CD4-positive, alpha-beta T cell (primary cell): ENCODE measurements at regions of chr12 and their contacts with region 1.

Region 1: GRCh38 chr12:66409195-66409871 is 107.0 kb downstream of the HELB start:
- DNase-seq: peak in 12 of 14 experiments; percentile 4 to 73 (median 26)
- ATAC-seq: no peak
- H3K4me3 ChIP-seq: no peak overlapping the region
- H3K4me3 Mint-ChIP-seq: no peak overlapping the region
- H3K27ac ChIP-seq: no peak overlapping the region
- H3K27ac Mint-ChIP-seq: no peak overlapping the region
- H3K4me1 ChIP-seq: no peaks in the 10 kb centered on the region
- H3K4me1 Mint-ChIP-seq: no peaks in the 10 kb centered on the region
- H3K27me3 ChIP-seq: no peaks in the 10 kb centered on the region
- H3K27me3 Mint-ChIP-seq: peaks cover 19% of the 10 kb centered on the region
- CTCF ChIP-seq: peak; percentile 93

Region 2: DNA sequence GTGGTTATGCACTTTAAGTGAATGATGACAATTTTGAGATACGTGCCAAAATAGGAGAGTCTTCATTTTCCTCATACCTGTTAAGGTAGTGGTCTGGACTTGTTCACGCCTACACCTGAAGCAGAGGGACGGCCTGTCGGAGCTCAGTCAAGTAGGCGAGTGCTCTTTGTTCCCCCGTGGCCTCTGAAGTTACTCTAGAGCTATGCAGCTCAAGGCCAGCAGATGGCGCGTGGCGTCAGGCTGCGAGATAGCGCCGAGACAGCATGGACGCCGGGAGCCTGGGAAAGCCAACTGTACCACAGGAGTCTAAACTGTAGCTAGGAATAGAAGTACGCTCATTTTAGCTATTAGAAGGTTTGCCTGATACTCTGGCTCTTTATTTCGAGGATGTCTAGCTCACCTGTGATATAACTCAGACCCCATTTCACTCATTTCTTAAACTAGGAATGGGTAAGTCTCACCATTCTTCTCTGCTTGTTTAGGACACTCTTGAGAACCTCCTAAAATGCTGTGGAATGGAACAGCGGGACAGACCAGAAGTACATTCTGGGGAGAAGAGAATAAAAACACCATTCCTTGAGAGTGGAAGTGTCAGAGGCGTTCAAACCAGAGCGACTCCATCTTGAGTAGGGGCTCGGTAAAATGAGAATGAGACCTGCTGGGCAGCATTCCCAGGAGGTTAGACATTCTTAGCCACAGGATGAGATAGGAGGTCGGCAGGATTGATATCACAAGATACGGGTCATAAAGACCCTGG is 852.5 kb before region 1 on chr12:
- CTCF ChIA-PET with region 1: no interaction called
- POLR2A ChIA-PET with region 1: no interaction called
- intact Hi-C with region 1: loop called in 1 of 2 experiments (anchors 2 kb)
- DNase-seq: peak; percentile 22 to 69 (median 40)
- ATAC-seq: peak; percentile 82
- H3K4me3 ChIP-seq: no peak overlapping the region
- H3K4me3 Mint-ChIP-seq: no peak overlapping the region
- H3K27ac ChIP-seq: no peak overlapping the region
- H3K27ac Mint-ChIP-seq: no peak overlapping the region
- H3K4me1 ChIP-seq: peaks cover 5% of the 10 kb centered on the region
- H3K4me1 Mint-ChIP-seq: no peaks in the 10 kb centered on the region
- H3K27me3 ChIP-seq: peaks cover 0 to 4% of the 10 kb centered on the region in 2 experiments
- H3K27me3 Mint-ChIP-seq: peaks cover 19% of the 10 kb centered on the region
- CTCF ChIP-seq: peak; percentile 70

Region 3: DNA sequence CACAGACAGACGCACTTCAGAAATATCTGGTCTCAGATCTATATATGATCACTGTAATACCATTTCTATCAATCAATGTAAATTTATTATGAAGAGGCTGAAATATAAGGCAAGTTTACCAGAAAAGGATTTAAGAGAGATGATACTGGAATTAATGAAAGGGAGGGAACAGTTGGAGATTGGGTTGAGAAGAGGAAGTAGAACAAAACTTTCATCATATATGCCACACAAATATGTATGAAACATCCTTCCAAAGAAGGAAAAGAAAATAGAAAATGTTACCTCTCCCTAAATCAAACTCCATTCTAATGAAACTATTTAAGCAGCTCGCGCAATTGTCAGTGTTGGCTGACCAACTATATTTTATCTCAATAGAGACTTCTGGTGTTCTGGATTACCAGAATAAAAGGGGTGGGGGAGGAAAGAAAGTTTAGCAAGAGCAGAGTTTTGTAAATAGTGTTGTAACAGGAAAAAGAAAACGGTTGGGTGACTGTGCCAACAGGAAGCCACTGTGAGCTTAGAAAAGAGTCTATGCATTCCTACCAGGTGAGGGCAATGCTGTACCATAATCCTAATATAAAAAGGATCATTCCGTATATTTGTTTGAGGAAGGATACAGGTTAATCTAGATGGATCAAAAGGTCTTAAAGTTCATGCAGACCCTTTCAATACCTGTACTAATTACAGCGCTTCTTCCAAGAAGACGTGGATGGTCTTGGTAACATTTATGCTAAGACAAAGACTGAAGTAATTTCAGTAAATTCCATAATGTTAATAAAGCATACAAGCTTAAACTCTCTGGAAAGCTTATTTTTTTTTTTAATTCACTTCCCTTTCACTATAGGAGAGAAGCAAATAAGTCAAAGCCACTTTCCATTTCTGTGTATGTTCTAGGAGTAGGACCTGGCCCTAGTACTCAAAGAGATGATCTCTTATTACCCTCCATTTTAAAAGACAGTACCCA is 264.3 kb before region 1 on chr12:
- CTCF ChIA-PET with region 1: no interaction called
- POLR2A ChIA-PET with region 1: no interaction called
- intact Hi-C with region 1: loop called (anchors 1 kb)
- DNase-seq: peak in 3 of 14 experiments; percentile 11 to 52 (median 52)
- ATAC-seq: peak; percentile 73
- H3K4me3 ChIP-seq: no peak overlapping the region
- H3K4me3 Mint-ChIP-seq: no peak overlapping the region
- H3K27ac ChIP-seq: no peak overlapping the region
- H3K27ac Mint-ChIP-seq: peak overlapping the region; percentile 50
- H3K4me1 ChIP-seq: no peaks in the 10 kb centered on the region
- H3K4me1 Mint-ChIP-seq: peaks cover 34% of the 10 kb centered on the region
- H3K27me3 ChIP-seq: no peaks in the 10 kb centered on the region
- H3K27me3 Mint-ChIP-seq: no peaks in the 10 kb centered on the region
- CTCF ChIP-seq: peak; percentile 36

Region 4: DNA sequence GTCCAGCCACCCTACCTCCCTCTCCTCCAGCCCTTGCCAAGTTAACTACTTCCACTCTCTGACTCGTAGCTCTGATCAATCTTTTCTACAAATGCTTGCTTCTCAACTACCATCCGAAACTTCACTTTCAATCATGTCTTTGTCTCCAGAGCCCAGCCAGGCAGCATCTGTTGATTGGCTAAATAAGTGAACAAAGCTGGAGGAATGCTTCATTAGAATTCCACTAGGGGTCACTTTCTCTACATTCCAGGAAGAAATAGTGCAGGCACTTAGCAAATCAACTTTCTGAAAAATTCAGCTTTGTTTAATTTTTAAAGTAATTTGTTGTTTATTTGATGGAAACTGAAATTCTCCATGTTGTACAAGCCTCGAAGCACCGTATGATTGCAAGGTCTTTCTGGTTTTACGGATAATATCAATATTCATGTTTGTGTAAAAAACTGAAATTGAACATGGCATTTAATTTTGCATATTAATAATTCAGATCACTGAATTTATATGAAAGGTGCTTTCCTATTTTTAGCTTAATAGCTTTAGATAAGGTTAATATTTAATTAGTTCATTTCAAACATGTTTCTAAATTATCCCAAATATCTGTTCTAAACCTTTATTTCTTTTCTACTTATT is 139.5 kb before region 1 on chr12:
- CTCF ChIA-PET with region 1: interaction called, 13 read pairs
- POLR2A ChIA-PET with region 1: no interaction called
- intact Hi-C with region 1: loop called (anchors 1 kb)
- DNase-seq: peak in 5 of 14 experiments; percentile 7 to 72 (median 67)
- ATAC-seq: peak; percentile 73
- H3K4me3 ChIP-seq: no peak overlapping the region
- H3K4me3 Mint-ChIP-seq: no peak overlapping the region
- H3K27ac ChIP-seq: no peak overlapping the region
- H3K27ac Mint-ChIP-seq: no peak overlapping the region
- H3K4me1 ChIP-seq: peaks cover 20% of the 10 kb centered on the region
- H3K4me1 Mint-ChIP-seq: peaks cover 6% of the 10 kb centered on the region
- H3K27me3 ChIP-seq: no peaks in the 10 kb centered on the region
- H3K27me3 Mint-ChIP-seq: no peaks in the 10 kb centered on the region
- CTCF ChIP-seq: peak; percentile 83

Region 5: GRCh38 chr12:66279123-66279712 is 130.1 kb before region 1 on chr12:
- CTCF ChIA-PET with region 1: interaction called, 3 read pairs
- POLR2A ChIA-PET with region 1: no interaction called
- intact Hi-C with region 1: loop called (anchors 1 to 2 kb)
- DNase-seq: peak; percentile 29 to 74 (median 42)
- ATAC-seq: peak; percentile 76
- H3K4me3 ChIP-seq: no peak overlapping the region
- H3K4me3 Mint-ChIP-seq: peak overlapping the region; percentile 2
- H3K27ac ChIP-seq: no peak overlapping the region
- H3K27ac Mint-ChIP-seq: no peak overlapping the region
- H3K4me1 ChIP-seq: peaks cover 27% of the 10 kb centered on the region
- H3K4me1 Mint-ChIP-seq: peaks cover 66% of the 10 kb centered on the region
- H3K27me3 ChIP-seq: no peaks in the 10 kb centered on the region
- H3K27me3 Mint-ChIP-seq: no peaks in the 10 kb centered on the region
- CTCF ChIP-seq: peak; percentile 83

Region 6: DNA sequence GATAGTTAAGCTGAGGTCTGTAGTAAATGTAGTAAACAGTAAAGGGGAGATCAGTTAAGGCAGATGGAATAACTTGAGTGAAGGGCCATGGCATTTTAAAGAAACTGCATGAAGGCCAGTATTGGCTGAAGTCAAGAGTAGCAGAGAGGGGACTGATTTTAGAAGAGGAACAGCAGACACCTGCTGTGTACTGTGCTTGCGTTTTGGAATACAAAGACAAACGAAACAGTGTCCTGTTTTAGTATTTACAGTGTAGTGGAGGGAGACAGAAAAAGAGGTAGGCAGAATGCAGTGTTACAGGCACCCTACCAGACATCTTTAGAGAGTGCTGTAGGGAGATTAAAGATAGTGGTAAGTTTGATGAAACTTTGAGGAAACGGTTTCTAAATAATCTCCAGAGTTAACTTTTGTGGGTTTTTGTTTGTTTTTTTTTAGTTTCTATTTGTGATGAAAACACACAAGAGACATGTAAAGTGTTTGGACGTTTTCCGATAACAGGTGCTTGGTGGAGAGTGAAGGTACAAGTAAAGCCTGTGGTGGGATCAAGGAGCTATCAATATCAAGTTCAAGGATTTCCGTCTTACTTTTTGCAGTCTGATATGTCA is 104.9 kb before region 1 on chr12:
- CTCF ChIA-PET with region 1: no interaction called
- POLR2A ChIA-PET with region 1: no interaction called
- intact Hi-C with region 1: no loop called
- DNase-seq: peak in 3 of 14 experiments; percentile 22 to 26 (median 24)
- ATAC-seq: peak; percentile 12
- H3K4me3 ChIP-seq: peak overlapping the region; percentile 87
- H3K4me3 Mint-ChIP-seq: peak overlapping the region; percentile 97
- H3K27ac ChIP-seq: peak overlapping the region; percentile 73 to 89
- H3K27ac Mint-ChIP-seq: peak overlapping the region; percentile 87
- H3K4me1 ChIP-seq: peaks cover 16% of the 10 kb centered on the region
- H3K4me1 Mint-ChIP-seq: peaks cover 72% of the 10 kb centered on the region
- H3K27me3 ChIP-seq: no peaks in the 10 kb centered on the region
- H3K27me3 Mint-ChIP-seq: no peaks in the 10 kb centered on the region
- CTCF ChIP-seq: no peak